SK-N-SH (cell line): ENCODE measurements at regions of chr12 and their contacts with region 1.

Region 1: GRCh38 chr12:57452937-57453509 is 2.1 kb upstream of the INHBE start:
- DNase-seq: peak; percentile 81
- H3K4me3 ChIP-seq: no peak overlapping the region
- H3K27ac ChIP-seq: no peak overlapping the region
- H3K4me1 ChIP-seq: peaks cover 6 to 16% of the 10 kb centered on the region in 2 experiments; a peak in 2 of 4 replicates
- H3K27me3 ChIP-seq: no peaks in the 10 kb centered on the region
- CTCF ChIP-seq: peak; percentile 90
- EP300 ChIP-seq: no peak
- RAD21 ChIP-seq: peak; percentile 97

Region 2: DNA sequence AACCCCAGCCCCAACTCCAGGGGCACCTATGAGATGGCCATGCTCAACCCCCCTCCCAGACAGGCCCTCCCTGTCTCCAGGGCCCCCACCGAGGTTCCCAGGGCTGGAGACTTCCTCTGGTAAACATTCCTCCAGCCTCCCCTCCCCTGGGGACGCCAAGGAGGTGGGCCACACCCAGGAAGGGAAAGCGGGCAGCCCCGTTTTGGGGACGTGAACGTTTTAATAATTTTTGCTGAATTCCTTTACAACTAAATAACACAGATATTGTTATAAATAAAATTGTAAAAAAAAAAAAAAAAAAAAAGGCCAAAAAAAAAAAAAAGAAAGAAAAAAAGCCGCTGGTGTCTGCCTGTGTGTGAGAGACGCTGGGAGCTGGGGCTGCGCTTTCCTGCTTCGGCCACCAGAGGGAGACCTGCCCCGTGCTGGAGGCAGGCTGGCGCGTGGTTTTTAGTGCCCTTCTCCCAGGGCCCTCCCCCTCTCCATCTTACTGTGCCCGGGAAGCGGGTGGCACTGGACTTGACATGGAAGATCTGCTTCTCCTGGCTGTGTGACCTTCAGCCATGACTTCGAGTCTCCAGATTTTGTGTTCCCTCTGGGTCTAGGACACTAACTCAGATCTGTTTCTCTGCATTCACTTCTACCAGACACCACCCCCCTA is 239.8 kb before region 1 on chr12:
- CTCF ChIA-PET with region 1: interaction called, 50 read pairs
- POLR2A ChIA-PET with region 1: no interaction called
- DNase-seq: peak; percentile 96
- H3K4me3 ChIP-seq: no peak overlapping the region; a peak in 1 of 4 replicates
- H3K27ac ChIP-seq: no peak overlapping the region
- H3K4me1 ChIP-seq: peaks cover 0 to 27% of the 10 kb centered on the region in 2 experiments; a peak in 1 of 4 replicates
- H3K27me3 ChIP-seq: peaks cover 14% of the 10 kb centered on the region
- CTCF ChIP-seq: peak; percentile 92
- EP300 ChIP-seq: no peak
- RAD21 ChIP-seq: peak; percentile 81

Region 3: DNA sequence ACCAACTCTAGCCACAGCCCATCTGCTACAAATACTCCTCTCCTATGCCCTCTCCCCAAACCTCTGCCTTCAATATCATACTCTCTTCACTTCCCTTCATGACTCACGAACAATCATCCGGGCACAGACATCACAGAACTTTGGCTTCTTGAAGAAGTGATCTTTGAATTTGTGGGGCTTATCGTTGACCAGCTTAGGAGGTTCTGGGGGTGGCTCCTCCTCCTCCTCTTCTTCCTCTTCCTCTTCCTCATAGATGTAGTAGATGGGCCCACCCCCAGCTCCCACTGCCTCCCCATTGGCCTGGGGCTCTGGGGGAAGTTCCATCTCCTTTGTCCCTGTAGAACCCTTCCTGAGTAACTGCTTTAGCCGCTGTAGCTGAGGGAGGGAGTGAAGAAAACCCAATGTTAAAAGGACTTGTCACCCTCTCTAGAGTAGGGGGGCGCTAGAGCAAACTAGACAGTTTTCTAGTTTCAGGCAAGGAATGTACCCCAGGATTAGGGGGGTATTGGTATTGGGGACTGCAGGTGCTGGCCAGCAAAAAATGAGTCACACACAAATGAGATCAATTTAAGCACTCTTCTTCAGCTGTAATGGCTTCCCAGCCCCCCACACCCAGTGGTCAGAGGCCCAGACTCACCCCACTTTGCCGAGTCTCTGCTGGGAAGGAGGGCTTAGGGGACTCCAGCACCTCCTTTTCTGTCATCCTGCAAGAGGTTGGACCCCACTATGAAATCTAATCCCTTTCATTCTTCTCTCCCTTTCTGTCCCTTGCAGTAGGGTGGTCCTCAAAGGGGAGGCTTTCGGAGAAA is 203.9 kb before region 1 on chr12:
- CTCF ChIA-PET with region 1: interaction called, 81 read pairs
- POLR2A ChIA-PET with region 1: no interaction called
- DNase-seq: no peak
- H3K4me3 ChIP-seq: no peak overlapping the region
- H3K27ac ChIP-seq: no peak overlapping the region
- H3K4me1 ChIP-seq: no peaks in the 10 kb centered on the region; a peak in 1 of 4 replicates
- H3K27me3 ChIP-seq: no peaks in the 10 kb centered on the region
- CTCF ChIP-seq: no peak
- EP300 ChIP-seq: no peak
- RAD21 ChIP-seq: no peak

Region 4: DNA sequence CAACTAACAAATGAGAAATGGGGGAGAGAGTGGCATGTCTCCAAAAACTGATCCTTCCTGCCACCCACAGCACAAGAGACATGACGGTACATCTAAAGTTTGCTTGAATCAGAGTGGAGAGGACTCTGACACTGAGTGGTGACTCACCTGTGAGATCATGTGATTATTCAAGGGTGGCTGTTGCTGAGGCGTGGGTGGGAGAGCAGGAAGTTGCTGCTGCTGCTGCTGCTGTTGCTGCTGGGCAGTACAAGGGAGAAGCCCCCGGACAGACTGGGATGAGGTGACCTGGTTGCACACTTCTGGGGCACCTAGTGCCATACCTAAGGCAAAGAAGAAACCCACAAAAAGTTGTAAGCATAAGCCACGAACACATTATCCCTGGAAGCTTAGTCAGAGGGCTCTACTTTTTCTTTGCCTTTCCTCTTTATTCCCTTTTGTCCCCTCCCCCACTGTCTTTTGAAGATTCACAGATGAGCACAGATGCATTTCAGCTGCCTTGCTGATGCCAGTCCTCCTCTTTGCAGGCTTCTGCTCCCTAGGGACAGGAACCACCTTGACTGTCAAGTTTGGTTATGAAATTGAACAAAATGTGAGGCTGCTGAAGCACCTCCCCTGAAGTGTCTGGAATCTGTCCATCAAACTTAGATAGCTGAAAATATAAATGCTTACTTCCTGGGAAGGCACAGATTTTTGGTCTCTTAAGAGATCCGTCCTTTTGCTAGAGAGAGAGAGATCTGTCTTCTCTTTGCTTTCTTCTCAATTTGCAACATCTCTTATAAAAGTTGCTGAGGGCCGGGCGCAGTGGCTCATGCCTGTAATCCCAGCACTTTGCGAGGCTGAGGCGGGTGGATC is 172.6 kb before region 1 on chr12:
- CTCF ChIA-PET with region 1: interaction called, 14 read pairs
- POLR2A ChIA-PET with region 1: no interaction called
- DNase-seq: no peak
- H3K4me3 ChIP-seq: peak overlapping the region in 1 of 2 experiments; percentile 30; a peak in 2 of 4 replicates
- H3K27ac ChIP-seq: peak overlapping the region; percentile 32 to 84
- H3K4me1 ChIP-seq: peaks cover 2 to 13% of the 10 kb centered on the region in 2 experiments; a peak in 2 of 4 replicates
- H3K27me3 ChIP-seq: no peaks in the 10 kb centered on the region
- CTCF ChIP-seq: no peak
- EP300 ChIP-seq: peak in 1 of 2 experiments; percentile 45; a peak in 1 of 4 replicates
- RAD21 ChIP-seq: no peak

Region 5: DNA sequence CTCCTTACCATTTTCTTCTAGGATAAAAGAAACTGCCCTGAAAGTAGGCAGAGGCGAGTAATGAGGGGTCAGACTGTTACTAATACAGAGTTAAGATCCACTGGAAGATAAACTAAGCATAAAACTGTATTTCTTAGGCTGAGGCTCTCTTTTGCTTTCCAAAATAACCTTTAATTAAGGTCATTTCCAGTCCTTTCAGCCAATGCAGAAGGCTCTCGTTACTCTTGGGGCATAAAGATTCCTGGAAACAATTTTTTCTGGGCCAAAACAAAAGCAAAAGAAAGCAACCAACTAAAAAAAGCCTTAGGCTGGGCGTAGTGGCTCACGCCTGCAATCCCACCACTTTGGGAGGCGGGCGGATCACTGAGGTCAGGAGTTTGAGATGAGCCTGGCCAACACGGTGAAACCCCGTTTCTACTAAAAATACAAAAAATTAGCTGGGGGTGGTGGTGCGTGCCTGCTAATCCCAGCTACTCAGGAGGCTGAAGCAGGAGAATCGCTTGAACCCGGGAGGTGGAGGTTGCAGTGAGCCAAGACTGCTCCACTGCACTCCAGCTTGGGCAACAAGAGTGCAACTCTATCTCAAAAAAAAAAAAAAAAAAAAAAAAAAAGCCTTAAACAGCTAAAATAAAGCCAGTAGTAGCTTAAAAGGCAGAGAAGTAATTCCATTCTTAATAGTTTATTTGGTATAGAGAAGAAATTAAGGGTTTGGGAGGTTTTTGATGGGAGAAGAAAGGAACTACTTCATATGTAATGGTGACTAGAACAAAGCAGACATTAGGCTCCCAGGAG is 133.1 kb before region 1 on chr12:
- CTCF ChIA-PET with region 1: interaction called, 391 read pairs
- POLR2A ChIA-PET with region 1: no interaction called
- DNase-seq: no peak
- H3K4me3 ChIP-seq: no peak overlapping the region
- H3K27ac ChIP-seq: peak overlapping the region in 1 of 2 experiments; percentile 47; a peak in 2 of 4 replicates
- H3K4me1 ChIP-seq: 0 out of 4 replicates have a peak, but pooled peaks cover 0 to 3% of the 10 kb centered on the region in 2 experiments
- H3K27me3 ChIP-seq: no peaks in the 10 kb centered on the region
- CTCF ChIP-seq: no peak
- EP300 ChIP-seq: no peak
- RAD21 ChIP-seq: no peak

Region 6: DNA sequence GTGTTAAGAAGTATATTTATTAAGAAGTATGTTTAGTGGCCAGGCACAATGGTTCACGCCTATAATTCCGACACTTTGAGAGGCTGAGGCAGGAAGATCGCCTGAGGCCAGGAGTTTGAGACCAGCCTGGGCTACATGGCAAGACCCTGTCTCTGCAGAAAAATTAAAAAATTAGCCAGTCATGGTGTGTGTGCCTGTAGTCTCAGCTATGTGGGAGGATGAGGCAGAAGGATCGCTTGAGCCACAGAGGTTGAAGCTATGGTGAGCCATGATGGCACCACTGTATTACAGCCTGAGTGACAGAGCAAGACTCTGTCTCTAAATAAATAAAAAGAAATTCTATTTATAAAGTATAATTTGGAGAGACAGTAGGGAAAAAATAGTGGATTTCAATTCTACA is 42.5 kb before region 1 on chr12:
- CTCF ChIA-PET with region 1: interaction called, 10 read pairs
- POLR2A ChIA-PET with region 1: no interaction called
- DNase-seq: no peak
- H3K4me3 ChIP-seq: no peak overlapping the region
- H3K27ac ChIP-seq: no peak overlapping the region
- H3K4me1 ChIP-seq: no peaks in the 10 kb centered on the region; a peak in 2 of 4 replicates
- H3K27me3 ChIP-seq: no peaks in the 10 kb centered on the region
- CTCF ChIP-seq: no peak
- EP300 ChIP-seq: no peak
- RAD21 ChIP-seq: no peak

Region 7: DNA sequence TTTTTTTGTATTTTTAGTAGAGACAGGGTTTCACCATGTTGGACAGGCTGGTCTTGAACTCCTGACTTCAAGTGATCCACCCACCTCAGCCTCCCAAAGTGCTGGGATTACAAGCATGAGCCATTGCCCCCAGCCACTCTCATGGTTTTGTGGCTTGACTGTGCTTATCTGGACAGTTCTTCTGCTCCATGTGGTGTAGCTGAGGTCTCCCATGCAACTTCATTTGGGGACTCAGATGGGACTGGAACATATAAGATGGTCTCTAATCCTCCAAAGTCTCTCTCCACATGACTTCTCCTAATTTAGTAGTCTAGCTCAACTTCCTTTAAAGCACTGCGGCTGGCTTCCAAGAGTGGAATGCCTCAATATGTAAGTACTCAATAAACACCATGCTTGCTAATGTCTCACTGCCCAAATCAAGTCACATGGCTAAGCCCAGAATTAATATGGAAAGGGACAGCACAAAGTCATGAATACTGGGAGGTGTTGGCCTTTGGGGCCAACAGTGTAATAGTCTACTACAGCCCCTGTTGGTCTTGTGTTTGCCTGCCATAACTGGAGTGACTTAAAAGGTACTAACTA is 11.1 kb before region 1 on chr12:
- CTCF ChIA-PET with region 1: interaction called, 49 read pairs
- POLR2A ChIA-PET with region 1: no interaction called
- DNase-seq: no peak
- H3K4me3 ChIP-seq: no peak overlapping the region
- H3K27ac ChIP-seq: no peak overlapping the region
- H3K4me1 ChIP-seq: no peaks in the 10 kb centered on the region
- H3K27me3 ChIP-seq: no peaks in the 10 kb centered on the region
- CTCF ChIP-seq: no peak
- EP300 ChIP-seq: no peak
- RAD21 ChIP-seq: no peak

Region 8: GRCh38 chr12:57535764-57536596 is 83.0 kb after region 1 on chr12:
- CTCF ChIA-PET with region 1: no interaction called
- POLR2A ChIA-PET with region 1: no interaction called
- DNase-seq: no peak
- H3K4me3 ChIP-seq: no peak overlapping the region
- H3K27ac ChIP-seq: no peak overlapping the region
- H3K4me1 ChIP-seq: no peaks in the 10 kb centered on the region
- H3K27me3 ChIP-seq: no peaks in the 10 kb centered on the region
- CTCF ChIP-seq: no peak
- EP300 ChIP-seq: no peak
- RAD21 ChIP-seq: no peak